IMR-90 (cell line): ENCODE measurements at regions of chr13 and their contacts with region 1.

Region 1: DNA sequence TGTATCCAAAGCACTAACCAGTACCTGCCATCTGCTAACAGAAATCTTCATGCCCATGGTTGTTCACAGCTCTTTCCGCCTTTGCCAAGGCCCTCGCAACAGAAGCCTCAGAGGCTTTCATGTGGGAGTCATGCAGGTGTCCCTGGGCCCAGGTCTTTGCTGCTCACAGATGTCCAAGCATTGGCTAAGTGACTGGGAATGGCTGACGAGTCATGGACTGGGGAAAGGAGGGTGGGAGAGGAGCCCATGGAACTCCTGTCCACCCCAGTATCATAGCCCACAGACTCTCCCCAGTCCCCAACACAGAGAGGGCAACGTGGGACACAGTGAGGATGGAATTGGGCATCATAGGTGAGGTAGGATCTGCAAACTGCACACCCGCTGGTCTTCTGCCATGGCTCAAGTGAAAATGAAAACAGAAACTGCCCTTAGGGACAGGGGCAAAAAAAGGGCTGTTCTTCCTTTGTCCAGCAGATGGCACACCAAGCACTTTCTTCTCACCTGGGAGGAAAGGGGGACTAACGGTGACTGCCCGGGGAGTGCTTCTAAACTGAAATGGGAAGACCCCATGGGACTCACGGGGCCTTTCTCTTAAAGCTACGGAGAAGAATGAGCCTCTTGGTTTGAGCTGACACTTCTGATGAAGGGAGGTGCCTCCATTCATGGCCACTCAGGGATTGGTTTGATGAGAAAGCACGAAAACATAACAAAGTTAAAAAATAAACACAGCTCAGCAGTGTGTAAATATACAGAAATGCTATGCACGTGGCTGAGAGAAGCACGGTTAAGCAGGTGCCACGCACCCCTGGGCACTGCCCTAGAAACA is 11.1 kb upstream of the DHRS12 start:
- DNase-seq: peak; percentile 50
- ATAC-seq: peak; percentile 86
- H3K4me3 ChIP-seq: peak overlapping the region; percentile 30
- H3K27ac ChIP-seq: no peak overlapping the region
- H3K4me1 ChIP-seq: no peaks in the 10 kb centered on the region
- H3K27me3 ChIP-seq: peaks cover 40% of the 10 kb centered on the region
- CTCF ChIP-seq: peak; percentile 79
- POLR2A ChIP-seq: no peak
- RAD21 ChIP-seq: peak; percentile 64

Region 2: DNA sequence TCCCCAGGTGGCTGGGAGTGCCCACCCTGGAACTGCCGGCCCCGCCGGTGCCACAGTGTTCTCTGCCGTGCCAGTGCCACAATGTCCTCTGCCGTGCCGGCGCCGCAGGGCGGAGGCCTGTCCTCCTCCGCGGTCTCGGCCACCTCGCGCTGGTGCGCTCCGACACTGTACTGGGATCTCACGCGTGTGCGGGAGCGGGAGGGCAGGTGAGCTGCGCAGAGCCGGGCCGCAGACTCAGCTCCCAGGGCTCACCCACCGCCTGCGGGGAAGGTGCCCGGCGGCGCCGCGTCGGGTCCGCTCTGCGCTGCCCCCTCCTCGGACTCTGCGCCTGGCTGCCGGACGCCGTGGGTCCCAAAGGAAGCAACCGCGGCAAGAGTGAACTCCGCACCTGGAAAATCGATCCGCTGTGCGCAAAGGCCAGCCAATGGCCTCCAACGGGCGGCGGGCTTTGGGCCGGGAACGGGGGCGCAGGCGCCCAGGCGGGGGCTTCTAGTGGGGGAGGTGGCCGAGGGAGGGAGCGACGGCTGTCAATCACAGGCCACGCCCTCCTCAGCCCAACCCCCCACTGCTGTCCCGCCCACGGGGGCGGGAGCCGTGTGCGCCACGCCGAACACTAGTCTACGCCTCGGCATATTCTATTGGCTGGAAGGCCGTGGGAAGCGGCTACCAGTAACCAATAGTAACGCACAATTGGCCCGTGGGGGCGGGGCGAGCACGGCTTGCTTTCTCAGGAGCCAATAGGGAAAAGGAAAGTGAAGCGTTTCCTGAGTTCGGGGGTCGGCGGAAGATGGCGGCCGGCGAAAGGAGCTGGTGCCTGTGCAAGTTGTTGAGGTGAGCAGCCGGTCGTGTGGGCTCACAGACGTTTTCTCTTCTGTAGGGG is 196.8 kb after region 1 on chr13 and contains the start of gene ALG11:
- CTCF ChIA-PET with region 1: no interaction called
- POLR2A ChIA-PET with region 1: no interaction called
- dilution Hi-C with region 1: no loop called
- in situ Hi-C with region 1: no loop called
- intact Hi-C with region 1: loop called (anchors 10 kb)
- DNase-seq: peak; percentile 97
- ATAC-seq: peak; percentile 99
- H3K4me3 ChIP-seq: peak within 1 kb of the TSS; percentile 92
- H3K27ac ChIP-seq: peak within 1 kb of the TSS; percentile 62
- H3K4me1 ChIP-seq: no peaks in the 10 kb centered on the region
- H3K27me3 ChIP-seq: peaks cover 10% of the 10 kb centered on the region
- CTCF ChIP-seq: no peak
- POLR2A ChIP-seq: peak; percentile 86
- RAD21 ChIP-seq: no peak
- total RNA-seq, gene ALG11: 12.7 and 25.6 TPM in 2 replicates